Left colon (tissue), 2 donors: ENCODE measurements at regions of chr11 and their contacts with region 1.

Region 1: GRCh38 chr11:14907411-14908213 is 15.6 kb upstream of the CYP2R1 start:
- DNase-seq: peak; percentile 71 to 93
- ATAC-seq: peak; percentile 90

Region 2: DNA sequence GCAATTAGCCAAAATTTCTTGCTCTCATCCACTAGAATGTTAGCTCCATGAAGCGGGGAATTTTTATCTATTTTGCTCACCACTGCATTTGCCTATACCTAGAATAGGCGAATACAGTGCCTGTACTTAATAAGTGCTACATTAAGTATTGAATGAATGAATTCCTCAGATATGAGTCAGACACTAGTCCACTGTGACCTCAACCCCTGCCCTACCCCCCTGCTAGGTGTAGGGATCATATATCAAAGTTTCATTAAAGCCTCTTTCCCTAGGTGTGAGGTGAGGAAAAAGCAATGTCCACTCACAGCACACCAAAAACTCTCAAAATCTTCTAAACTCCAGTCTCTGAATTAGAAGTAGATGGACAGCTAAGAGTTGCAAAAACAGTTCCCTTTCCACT is 377.7 kb before region 1 on chr11:
- intact Hi-C with region 1: loop called in 1 of 2 experiments (anchors 5 kb)
- DNase-seq: no peak
- ATAC-seq: no peak

Region 3: DNA sequence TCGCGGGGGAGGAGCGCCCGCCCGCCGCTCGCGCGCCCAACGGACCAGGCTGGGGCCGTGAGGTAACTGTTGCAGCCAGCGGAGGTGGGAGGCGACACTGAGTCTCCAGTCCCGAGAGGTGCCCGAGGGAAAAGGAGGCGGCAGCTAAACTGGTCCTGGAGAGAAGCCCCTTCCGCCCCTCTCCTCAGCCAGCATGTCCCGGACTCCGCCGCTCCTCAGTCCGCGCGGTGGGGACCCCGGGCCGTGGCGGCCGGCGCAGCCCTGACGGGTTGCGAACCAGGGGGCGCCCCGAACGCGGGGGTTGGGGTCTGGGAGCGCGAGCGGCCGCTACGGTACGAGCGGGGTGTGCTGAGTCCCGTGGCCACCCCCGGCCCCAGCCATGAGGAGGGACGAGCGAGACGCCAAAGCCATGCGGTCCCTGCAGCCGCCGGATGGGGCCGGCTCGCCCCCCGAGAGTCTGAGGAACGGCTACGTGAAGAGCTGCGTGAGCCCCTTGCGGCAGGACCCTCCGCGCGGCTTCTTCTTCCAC is 263.9 kb before region 1 on chr11 and contains the start of gene PDE3B:
- intact Hi-C with region 1: loop called in 1 of 2 experiments (anchors 10 kb)
- DNase-seq: peak; percentile 89 to 90
- ATAC-seq: peak; percentile 89
- total RNA-seq, gene PDE3B: 23.9 to 32.9 TPM

Region 4: GRCh38 chr11:14722496-14722895 is 185.1 kb before region 1 on chr11:
- intact Hi-C with region 1: no loop called
- DNase-seq: no peak
- ATAC-seq: no peak

Region 5: GRCh38 chr11:14789879-14790484 is 117.6 kb before region 1 on chr11:
- intact Hi-C with region 1: loop called in 1 of 2 experiments (anchors 5 kb)
- DNase-seq: no peak
- ATAC-seq: no peak

Region 6: DNA sequence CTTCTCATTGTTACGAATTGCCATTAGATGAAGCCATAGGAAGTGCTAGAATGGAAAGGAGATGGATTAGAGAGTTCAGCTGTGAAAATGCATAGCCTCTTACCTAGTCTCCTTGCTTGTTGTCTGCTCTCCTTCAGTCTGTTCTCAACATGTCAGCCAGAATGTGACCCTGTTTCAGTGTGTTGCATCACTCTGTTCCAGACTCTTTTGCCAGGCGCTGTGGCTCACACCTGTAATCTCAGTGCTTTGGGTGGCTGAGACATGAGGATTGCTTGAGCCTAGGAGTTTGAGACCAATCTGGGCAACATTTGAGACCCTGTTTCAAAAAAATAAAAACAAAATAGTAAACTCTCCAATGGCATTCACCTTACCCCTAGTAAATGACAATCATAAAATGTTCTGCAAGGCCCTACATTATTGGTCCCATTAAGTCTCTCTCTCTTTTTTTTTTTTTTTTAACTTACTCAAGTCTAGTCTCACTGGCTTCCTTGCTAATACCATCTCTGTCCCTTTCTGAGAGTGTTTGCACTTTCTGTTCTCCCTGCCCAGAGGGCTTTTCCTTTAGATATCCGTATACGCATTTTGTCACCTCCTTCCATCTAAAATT is 54.9 kb before region 1 on chr11:
- intact Hi-C with region 1: no loop called
- DNase-seq: no peak
- ATAC-seq: no peak

Region 7: DNA sequence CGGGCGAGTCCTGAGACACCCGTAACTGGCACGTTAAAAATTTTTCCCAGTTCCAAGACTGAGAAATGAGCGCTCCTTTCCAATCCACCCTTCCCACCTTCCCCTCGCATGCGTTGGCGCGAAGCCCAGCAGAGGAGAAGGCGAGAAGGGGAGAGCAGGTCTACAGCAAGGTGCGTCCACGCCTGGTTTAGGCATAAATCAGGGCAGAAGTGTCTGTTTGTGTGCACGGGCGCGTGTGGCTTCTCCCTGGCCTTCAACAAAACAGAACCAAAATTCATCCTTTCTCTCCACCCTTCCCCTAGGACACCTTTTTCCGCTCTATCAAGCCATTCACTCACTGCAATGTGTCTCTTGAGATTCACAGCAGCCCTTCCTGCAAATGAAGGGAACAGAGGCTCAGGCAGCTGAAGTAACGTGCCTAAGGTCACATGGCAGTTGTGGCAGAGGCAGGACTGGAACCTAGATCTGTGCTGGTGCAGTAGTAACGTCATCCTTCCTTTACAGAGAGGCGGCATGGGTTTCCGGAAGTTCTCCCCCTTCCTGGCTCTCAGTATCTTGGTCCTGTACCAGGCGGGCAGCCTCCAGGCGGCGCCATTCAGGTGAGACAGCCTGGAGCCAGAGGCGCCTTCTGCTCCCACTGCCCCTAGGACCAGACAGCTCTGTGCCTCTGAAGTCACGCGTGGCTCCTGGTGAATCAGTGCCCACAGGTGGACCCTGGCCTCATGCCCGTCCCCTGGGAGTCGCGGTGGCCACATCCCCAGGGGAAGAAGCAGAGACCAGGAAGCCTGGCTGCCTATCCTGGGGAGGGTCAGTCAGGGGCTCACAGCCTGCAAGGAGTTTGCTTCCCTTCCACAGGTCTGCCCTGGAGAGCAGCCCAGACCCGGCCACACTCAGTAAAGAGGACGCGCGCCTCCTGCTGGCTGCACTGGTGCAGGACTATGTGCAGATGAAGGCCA is 166.9 kb after region 1 on chr11:
- intact Hi-C with region 1: loop called (anchors 5 to 10 kb)
- DNase-seq: peak; percentile 73 to 95
- ATAC-seq: peak; percentile 94

Region 8: GRCh38 chr11:15208378-15209222 is 301.0 kb after region 1 on chr11:
- intact Hi-C with region 1: loop called in 1 of 2 experiments (anchors 10 kb)
- DNase-seq: peak; percentile 43 to 79
- ATAC-seq: peak; percentile 90

Region 9: DNA sequence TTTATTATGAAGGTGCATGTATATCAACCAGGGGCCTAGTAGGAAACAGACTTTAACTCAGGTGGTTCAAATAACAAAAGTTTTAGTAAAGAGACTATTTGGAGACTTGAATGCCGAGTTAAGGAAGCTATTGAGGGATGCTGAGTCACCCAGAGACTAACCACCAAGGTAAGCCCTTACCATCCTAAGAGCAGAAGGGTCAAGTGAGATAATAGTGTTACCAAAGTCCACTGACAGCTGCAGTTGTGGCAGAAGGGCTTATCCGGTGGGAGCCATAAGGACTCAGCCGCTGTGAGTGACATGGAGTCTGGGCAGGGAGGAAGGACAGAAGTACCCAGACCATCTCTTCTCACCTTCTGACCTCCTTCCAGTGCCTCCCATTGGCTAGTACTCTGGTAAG is 341.1 kb after region 1 on chr11:
- intact Hi-C with region 1: no loop called
- DNase-seq: no peak
- ATAC-seq: no peak